MCF 10A (cell line): ENCODE measurements at regions of chr5 and their contacts with region 1.

Region 1: GRCh38 chr5:40736103-40736875 is 19.5 kb downstream of the TTC33 start:
- DNase-seq: peak; percentile 66
- H3K4me3 Mint-ChIP-seq: no peak overlapping the region
- H3K27ac Mint-ChIP-seq: no peak overlapping the region
- H3K4me1 Mint-ChIP-seq: peaks cover 12% of the 10 kb centered on the region
- H3K27me3 Mint-ChIP-seq: no peaks in the 10 kb centered on the region
- CTCF ChIP-seq: peak; percentile 71

Region 2: GRCh38 chr5:39578887-39579497 is 1157.3 kb before region 1 on chr5:
- CTCF ChIA-PET with region 1: interaction called, 4 read pairs
- POLR2A ChIA-PET with region 1: interaction called, 3 read pairs
- intact Hi-C with region 1: loop called (anchors 1 kb)
- DNase-seq: peak; percentile 13
- H3K4me3 Mint-ChIP-seq: no peak overlapping the region
- H3K27ac Mint-ChIP-seq: no peak overlapping the region
- H3K4me1 Mint-ChIP-seq: peaks cover 5% of the 10 kb centered on the region
- H3K27me3 Mint-ChIP-seq: no peaks in the 10 kb centered on the region
- CTCF ChIP-seq: peak; percentile 54

Region 3: GRCh38 chr5:40165794-40166728 is 570.2 kb before region 1 on chr5:
- CTCF ChIA-PET with region 1: no interaction called
- POLR2A ChIA-PET with region 1: no interaction called
- intact Hi-C with region 1: loop called (anchors 5 kb)
- DNase-seq: peak; percentile 14
- H3K4me3 Mint-ChIP-seq: no peak overlapping the region
- H3K27ac Mint-ChIP-seq: no peak overlapping the region
- H3K4me1 Mint-ChIP-seq: peaks cover 10% of the 10 kb centered on the region
- H3K27me3 Mint-ChIP-seq: no peaks in the 10 kb centered on the region
- CTCF ChIP-seq: peak; percentile 16

Region 4: GRCh38 chr5:40507095-40507494 is 229.2 kb before region 1 on chr5:
- CTCF ChIA-PET with region 1: no interaction called
- POLR2A ChIA-PET with region 1: no interaction called
- intact Hi-C with region 1: loop called (anchors 1 kb)
- DNase-seq: no peak
- H3K4me3 Mint-ChIP-seq: no peak overlapping the region
- H3K27ac Mint-ChIP-seq: no peak overlapping the region
- H3K4me1 Mint-ChIP-seq: no peaks in the 10 kb centered on the region
- H3K27me3 Mint-ChIP-seq: no peaks in the 10 kb centered on the region
- CTCF ChIP-seq: no peak

Region 5: DNA sequence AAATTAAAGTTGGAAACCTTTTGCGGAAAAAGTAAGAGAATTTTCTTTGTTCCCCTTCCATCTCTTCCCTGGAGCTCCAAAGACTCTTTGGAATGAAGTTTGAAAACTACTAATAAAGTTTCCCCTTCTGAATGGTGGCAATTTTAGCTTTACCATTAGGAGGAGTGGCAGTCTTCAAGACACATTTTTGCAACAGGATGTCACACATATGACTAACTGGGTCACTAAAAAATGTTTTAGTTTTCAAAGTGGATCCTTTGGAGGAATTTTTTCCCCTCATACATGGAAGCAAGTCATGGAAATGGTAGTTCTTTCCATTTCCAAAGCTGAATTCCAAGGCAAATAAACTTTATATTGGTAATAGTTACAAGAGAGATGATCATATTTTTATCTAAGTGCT is 1204.4 kb after region 1 on chr5:
- CTCF ChIA-PET with region 1: no interaction called
- POLR2A ChIA-PET with region 1: no interaction called
- intact Hi-C with region 1: no loop called
- DNase-seq: no peak
- H3K4me3 Mint-ChIP-seq: no peak overlapping the region
- H3K27ac Mint-ChIP-seq: no peak overlapping the region
- H3K4me1 Mint-ChIP-seq: no peaks in the 10 kb centered on the region
- H3K27me3 Mint-ChIP-seq: no peaks in the 10 kb centered on the region
- CTCF ChIP-seq: no peak